GM12878 (cell line): ENCODE measurements at regions of chr22 and their contacts with region 1.

Region 1: GRCh38 chr22:35195821-35196220 is 61.5 kb upstream of the HMGXB4 start:
- DNase-seq: no peak
- ATAC-seq: no peak
- H3K4me3 ChIP-seq: no peak overlapping the region
- H3K27ac ChIP-seq: no peak overlapping the region
- H3K4me1 ChIP-seq: peaks cover 8% of the 10 kb centered on the region; the same call in 1 of the 2 replicates
- H3K27me3 ChIP-seq: no peaks in the 10 kb centered on the region
- CTCF ChIP-seq: no peak
- EP300 ChIP-seq: no peak
- POLR2A ChIP-seq: no peak
- RAD21 ChIP-seq: no peak

Region 2: GRCh38 chr22:35128637-35129036 is 67.2 kb before region 1 on chr22:
- CTCF ChIA-PET with region 1: no interaction called
- POLR2A ChIA-PET with region 1: no interaction called
- RAD21 ChIA-PET with region 1: no interaction called
- SMC1A ChIA-PET with region 1: no interaction called
- in situ Hi-C with region 1: no loop called
- intact Hi-C with region 1: no loop called
- DNase-seq: peak; percentile 95
- ATAC-seq: peak; percentile 78
- H3K4me3 ChIP-seq: no peak overlapping the region
- H3K27ac ChIP-seq: peak overlapping the region; percentile 99
- H3K4me1 ChIP-seq: peaks cover 80% of the 10 kb centered on the region
- H3K27me3 ChIP-seq: no peaks in the 10 kb centered on the region
- CTCF ChIP-seq: no peak
- EP300 ChIP-seq: peak; percentile 81 to 95
- POLR2A ChIP-seq: no peak
- RAD21 ChIP-seq: peak; percentile 13; the same call in 1 of the 2 replicates

Region 3: DNA sequence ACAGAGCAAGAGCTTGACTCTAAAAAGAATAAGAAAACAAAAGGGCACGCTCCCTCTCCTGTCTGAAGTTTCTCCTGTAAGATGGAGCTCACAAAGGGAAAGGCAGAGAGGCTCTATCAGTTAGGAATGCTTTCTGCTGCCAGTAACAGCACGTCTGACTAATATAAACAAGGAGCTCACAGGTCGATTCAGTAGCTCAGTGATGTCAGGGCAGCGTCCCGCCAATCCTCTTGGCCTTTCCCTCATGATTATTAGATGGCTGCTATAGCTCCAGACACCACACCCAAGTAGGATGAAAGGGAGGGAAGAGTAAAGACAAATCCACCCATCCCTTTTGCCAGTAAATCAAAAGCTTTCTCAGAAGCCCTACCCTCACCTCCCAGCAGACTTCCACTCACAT is 10.1 kb after region 1 on chr22:
- CTCF ChIA-PET with region 1: no interaction called
- POLR2A ChIA-PET with region 1: interaction called, 3 read pairs
- RAD21 ChIA-PET with region 1: no interaction called
- SMC1A ChIA-PET with region 1: interaction called, 18 read pairs
- in situ Hi-C with region 1: no loop called
- intact Hi-C with region 1: no loop called
- DNase-seq: no peak
- ATAC-seq: no peak
- H3K4me3 ChIP-seq: no peak overlapping the region
- H3K27ac ChIP-seq: no peak overlapping the region
- H3K4me1 ChIP-seq: no peaks in the 10 kb centered on the region
- H3K27me3 ChIP-seq: no peaks in the 10 kb centered on the region; a peak in 1 of 4 replicates
- CTCF ChIP-seq: no peak
- EP300 ChIP-seq: no peak
- POLR2A ChIP-seq: no peak
- RAD21 ChIP-seq: no peak

Region 4: DNA sequence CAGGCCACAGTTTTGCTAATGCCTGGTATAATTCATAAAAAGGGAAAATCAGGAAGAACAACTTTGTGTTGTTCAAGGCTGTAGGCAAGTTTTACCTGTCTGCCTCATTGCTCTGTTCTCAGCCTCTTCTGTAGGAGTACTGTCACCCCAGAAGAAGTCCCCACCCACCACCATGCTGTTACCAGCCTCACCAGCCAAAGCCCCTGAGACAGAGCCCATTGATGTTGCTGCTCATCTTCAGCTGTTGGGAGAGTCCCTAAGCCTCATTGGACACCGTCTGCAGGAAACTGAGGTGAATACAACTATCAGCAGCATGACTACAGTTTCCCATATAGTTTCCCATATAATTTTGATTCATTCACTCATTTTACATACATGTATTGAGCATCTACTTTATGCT is 92.3 kb after region 1 on chr22:
- CTCF ChIA-PET with region 1: no interaction called
- POLR2A ChIA-PET with region 1: no interaction called
- RAD21 ChIA-PET with region 1: no interaction called
- SMC1A ChIA-PET with region 1: no interaction called
- in situ Hi-C with region 1: no loop called
- intact Hi-C with region 1: no loop called
- DNase-seq: no peak
- ATAC-seq: no peak
- H3K4me3 ChIP-seq: no peak overlapping the region
- H3K27ac ChIP-seq: no peak overlapping the region
- H3K4me1 ChIP-seq: no peaks in the 10 kb centered on the region
- H3K27me3 ChIP-seq: no peaks in the 10 kb centered on the region
- CTCF ChIP-seq: no peak
- EP300 ChIP-seq: no peak
- POLR2A ChIP-seq: no peak
- RAD21 ChIP-seq: no peak

Region 5: GRCh38 chr22:35539910-35540594 is 344.2 kb after region 1 on chr22:
- CTCF ChIA-PET with region 1: no interaction called
- POLR2A ChIA-PET with region 1: no interaction called
- RAD21 ChIA-PET with region 1: no interaction called
- SMC1A ChIA-PET with region 1: no interaction called
- in situ Hi-C with region 1: no loop called
- intact Hi-C with region 1: no loop called
- DNase-seq: no peak
- ATAC-seq: peak; percentile 89
- H3K4me3 ChIP-seq: peak overlapping the region; percentile 44; the same call in 1 of the 2 replicates
- H3K27ac ChIP-seq: no peak overlapping the region
- H3K4me1 ChIP-seq: peaks cover 6% of the 10 kb centered on the region
- H3K27me3 ChIP-seq: peaks cover 7 to 17% of the 10 kb centered on the region in 2 experiments
- CTCF ChIP-seq: no peak
- EP300 ChIP-seq: no peak
- POLR2A ChIP-seq: no peak
- RAD21 ChIP-seq: no peak